Activated T-helper 1 cell treated with anti-CD3 and anti-CD28 coated beads, Interleukin-12 subunit alpha, Interleukin-12 subunit beta, Interleukin-2, Interleukin-4 antibody, amounts not matched to agents 30 ng/mL and 10 ng/mL and 1 ng/mL, durations not matched to agents 14 hours and 24 hours and 36 hours (primary cell): ENCODE measurements at regions of chr4 and their contacts with region 1.

Region 1: GRCh38 chr4:165207431-165208220 is at the start of gene KLHL2:
- DNase-seq: peak; percentile 72
- H3K4me3 Mint-ChIP-seq: peak within 1 kb of the TSS; percentile 94
- H3K27ac Mint-ChIP-seq: peak within 1 kb of the TSS; percentile 88
- H3K4me1 Mint-ChIP-seq: peaks cover 74% of the 10 kb centered on the region
- H3K27me3 Mint-ChIP-seq: no peaks in the 10 kb centered on the region
- total RNA-seq, gene KLHL2: 38.6 and 40.6 TPM in 2 replicates

Region 2: DNA sequence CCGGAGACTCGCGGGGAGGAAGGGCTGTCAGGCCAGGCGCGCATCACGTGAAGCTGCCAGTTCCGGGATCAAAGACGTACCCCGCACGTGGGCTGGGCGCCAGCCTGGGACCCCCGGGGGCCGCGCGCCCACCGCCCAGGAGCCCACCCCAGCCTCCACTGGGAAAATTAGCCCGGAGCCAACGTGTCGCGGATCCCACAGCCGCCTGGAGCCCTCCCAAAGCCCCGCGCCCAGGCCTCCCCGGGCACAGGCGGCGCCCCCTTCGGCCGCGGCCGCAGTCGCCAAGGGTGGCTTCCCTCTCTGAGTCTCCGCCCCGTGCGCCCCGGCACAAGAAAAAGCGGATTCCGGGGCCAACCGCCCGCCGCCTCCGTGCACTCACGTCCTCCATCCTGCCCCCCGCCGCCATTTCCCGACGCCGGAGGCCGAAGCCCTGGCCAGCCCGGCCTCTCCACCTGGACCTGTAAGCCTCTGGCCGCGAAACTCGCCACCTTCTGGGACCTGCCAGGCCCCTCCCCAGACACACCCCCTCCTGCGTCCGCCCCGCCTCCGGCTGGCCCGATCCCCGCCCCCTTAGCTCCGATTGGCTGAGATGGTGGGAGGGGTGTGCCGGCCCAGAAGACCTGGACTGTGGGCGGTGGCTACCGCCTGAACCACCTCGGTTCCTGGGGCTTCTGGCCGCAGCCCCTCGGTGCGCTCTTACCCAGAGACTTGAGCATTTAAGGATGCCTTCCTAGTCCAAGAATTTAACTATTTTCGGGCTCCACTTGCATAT is 95.1 kb before region 1 on chr4 and contains the start of gene TMEM192:
- intact Hi-C with region 1: loop called (anchors 1 kb)
- DNase-seq: peak; percentile 87
- H3K4me3 Mint-ChIP-seq: peak within 1 kb of the TSS; percentile 91
- H3K27ac Mint-ChIP-seq: peak within 1 kb of the TSS; percentile 86
- H3K4me1 Mint-ChIP-seq: peaks cover 12% of the 10 kb centered on the region
- H3K27me3 Mint-ChIP-seq: peaks cover 7% of the 10 kb centered on the region
- total RNA-seq, gene TMEM192: 8.1 and 10.5 TPM in 2 replicates

Region 3: GRCh38 chr4:165190591-165191347 is 16.9 kb before region 1 on chr4:
- intact Hi-C with region 1: loop called (anchors 1 kb)
- DNase-seq: no peak
- H3K4me3 Mint-ChIP-seq: peak overlapping the region; percentile 12
- H3K27ac Mint-ChIP-seq: peak overlapping the region; percentile 79
- H3K4me1 Mint-ChIP-seq: peaks cover 34% of the 10 kb centered on the region
- H3K27me3 Mint-ChIP-seq: no peaks in the 10 kb centered on the region

Region 4: DNA sequence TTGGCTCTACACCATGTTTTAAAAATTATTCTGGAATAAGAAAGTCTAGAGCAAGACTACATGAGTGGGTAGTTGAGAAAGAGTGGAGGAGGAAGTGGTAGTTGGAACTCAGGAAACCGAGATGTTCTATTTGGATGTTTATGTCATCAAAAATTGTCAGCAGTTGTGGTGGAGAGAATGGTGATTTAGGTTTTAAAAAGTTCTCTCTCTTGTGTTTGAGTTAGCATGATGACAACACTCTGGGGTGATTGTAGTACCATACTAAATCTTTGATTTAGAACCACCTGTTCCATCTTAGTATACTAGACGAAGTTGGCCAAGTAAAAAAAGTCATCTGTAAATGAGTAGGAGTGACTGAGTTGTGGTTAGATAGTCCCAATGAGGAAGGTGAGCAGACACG is 40.5 kb after region 1 on chr4:
- intact Hi-C with region 1: loop called (anchors 2 kb)
- DNase-seq: no peak
- H3K4me3 Mint-ChIP-seq: no peak overlapping the region
- H3K27ac Mint-ChIP-seq: no peak overlapping the region
- H3K4me1 Mint-ChIP-seq: peaks cover 8% of the 10 kb centered on the region
- H3K27me3 Mint-ChIP-seq: no peaks in the 10 kb centered on the region

Region 5: GRCh38 chr4:165327211-165328100 is 119.8 kb after region 1 on chr4 and contains the start of gene MSMO1:
- intact Hi-C with region 1: loop called (anchors 1 kb)
- DNase-seq: peak; percentile 99
- H3K4me3 Mint-ChIP-seq: no peak within 1 kb of the TSS
- H3K27ac Mint-ChIP-seq: no peak within 1 kb of the TSS
- H3K4me1 Mint-ChIP-seq: peaks cover 40% of the 10 kb centered on the region
- H3K27me3 Mint-ChIP-seq: no peaks in the 10 kb centered on the region
- total RNA-seq, gene MSMO1: 74.1 and 93.1 TPM in 2 replicates

Region 6: DNA sequence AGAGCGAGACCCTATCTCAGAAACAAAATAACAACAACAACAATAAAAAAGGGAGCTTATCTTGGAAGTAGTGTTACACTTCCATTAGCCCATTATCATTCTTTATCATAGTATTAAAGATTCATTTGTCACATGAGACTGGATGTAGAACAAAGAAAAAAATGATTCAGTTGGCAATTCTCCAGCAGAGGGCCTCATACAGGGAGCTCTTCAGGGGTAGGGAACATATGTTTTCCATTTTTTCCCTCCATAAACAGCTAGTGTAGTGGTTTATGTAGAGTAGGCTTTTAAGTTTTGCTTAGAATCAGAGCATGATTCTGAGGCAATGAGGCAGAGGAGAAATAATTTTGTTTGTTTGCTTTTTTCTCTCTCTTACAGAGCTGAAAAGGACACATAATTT is 177.0 kb after region 1 on chr4:
- intact Hi-C with region 1: no loop called
- DNase-seq: no peak
- H3K4me3 Mint-ChIP-seq: no peak overlapping the region
- H3K27ac Mint-ChIP-seq: no peak overlapping the region
- H3K4me1 Mint-ChIP-seq: no peaks in the 10 kb centered on the region
- H3K27me3 Mint-ChIP-seq: peaks cover 51% of the 10 kb centered on the region